A673 (cell line): ENCODE measurements at regions of chr2 and their contacts with region 1.

Region 1: GRCh38 chr2:84881581-84882414 is 914 bp upstream of the TRABD2A start:
- DNase-seq: peak; percentile 91
- H3K4me3 ChIP-seq: peak overlapping the region; percentile 39
- H3K27ac ChIP-seq: no peak overlapping the region
- H3K4me1 ChIP-seq: peaks cover 18% of the 10 kb centered on the region
- H3K27me3 ChIP-seq: peaks cover 65% of the 10 kb centered on the region
- CTCF ChIP-seq: peak; percentile 88

Region 2: GRCh38 chr2:84821806-84822205 is 60.0 kb before region 1 on chr2:
- CTCF ChIA-PET with region 1: no interaction called
- POLR2A ChIA-PET with region 1: interaction called, 15 read pairs
- intact Hi-C with region 1: no loop called
- DNase-seq: no peak
- H3K4me3 ChIP-seq: no peak overlapping the region
- H3K27ac ChIP-seq: no peak overlapping the region
- H3K4me1 ChIP-seq: no peaks in the 10 kb centered on the region
- H3K27me3 ChIP-seq: no peaks in the 10 kb centered on the region
- CTCF ChIP-seq: no peak

Region 3: DNA sequence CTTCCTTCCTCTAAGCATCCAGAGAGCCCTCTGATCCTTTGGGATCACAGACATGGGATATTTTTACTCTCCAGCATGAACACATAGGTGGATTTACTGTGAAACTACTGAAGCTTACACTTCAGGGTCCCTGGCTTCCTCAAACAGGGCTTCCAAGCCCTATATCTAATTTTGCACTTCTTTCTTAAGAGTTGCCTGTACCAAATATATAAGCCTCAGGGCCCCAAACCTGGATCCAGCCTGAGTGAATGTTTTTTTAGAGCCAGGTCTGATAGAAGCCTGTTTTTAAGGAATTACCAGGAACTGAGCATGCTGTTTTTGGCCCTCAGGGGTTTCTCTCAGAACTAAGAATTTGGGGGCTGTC is 76.0 kb after region 1 on chr2:
- CTCF ChIA-PET with region 1: no interaction called
- POLR2A ChIA-PET with region 1: no interaction called
- intact Hi-C with region 1: no loop called
- DNase-seq: no peak
- H3K4me3 ChIP-seq: no peak overlapping the region
- H3K27ac ChIP-seq: no peak overlapping the region
- H3K4me1 ChIP-seq: no peaks in the 10 kb centered on the region
- H3K27me3 ChIP-seq: no peaks in the 10 kb centered on the region
- CTCF ChIP-seq: no peak